ENCODE measurements at regions of chr15 and their contacts with region 1.

Region 1: DNA sequence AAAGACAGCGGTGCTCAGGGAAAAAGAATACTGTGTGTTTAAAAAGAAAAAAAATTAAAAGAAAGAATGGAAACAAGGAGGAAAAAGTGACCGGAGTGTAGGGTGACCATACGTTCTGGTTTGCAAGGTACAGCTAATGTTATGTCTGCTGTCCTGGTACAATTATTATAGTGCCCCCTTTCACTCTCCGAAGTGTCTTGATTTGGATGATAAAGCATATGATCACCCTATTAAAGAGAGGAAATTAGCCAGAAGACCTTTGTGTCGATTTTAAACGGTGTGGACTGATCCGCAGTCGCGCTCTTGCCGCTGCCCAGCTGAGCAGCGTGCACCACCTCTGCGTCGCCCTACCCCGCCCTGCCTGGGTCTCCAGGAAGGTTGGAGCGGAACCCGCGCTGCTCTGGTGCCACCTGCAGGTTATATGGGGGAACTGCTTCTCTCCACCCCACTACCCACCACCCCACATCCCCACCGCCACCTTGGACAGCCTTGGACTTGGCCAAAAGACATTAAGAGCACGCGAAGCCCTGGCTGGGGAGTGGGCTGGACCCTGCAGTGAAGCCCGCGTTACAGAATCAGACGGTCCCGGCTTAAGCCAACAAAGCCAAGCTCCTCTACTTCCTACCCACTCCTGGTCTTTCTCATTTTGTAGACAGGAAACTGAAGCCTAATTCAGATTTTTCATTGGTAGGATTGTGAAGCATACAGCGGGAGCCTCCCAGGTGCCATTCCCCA is 41.2 kb upstream of the UBE2Q2 start:
- DNase-seq: peak; percentile 85
- ATAC-seq: peak; percentile 99
- H3K4me3 Mint-ChIP-seq: peak overlapping the region; percentile 7
- H3K27ac Mint-ChIP-seq: no peak overlapping the region
- H3K4me1 Mint-ChIP-seq: peaks cover 7% of the 10 kb centered on the region
- H3K27me3 Mint-ChIP-seq: peaks cover 69% of the 10 kb centered on the region

Region 2: GRCh38 chr15:75684642-75685041 is 117.4 kb before region 1 on chr15:
- CTCF ChIA-PET with region 1: interaction called, 35 read pairs
- DNase-seq: no peak
- ATAC-seq: no peak
- H3K4me3 Mint-ChIP-seq: no peak overlapping the region
- H3K27ac Mint-ChIP-seq: no peak overlapping the region
- H3K4me1 Mint-ChIP-seq: no peaks in the 10 kb centered on the region
- H3K27me3 Mint-ChIP-seq: no peaks in the 10 kb centered on the region

Region 3: DNA sequence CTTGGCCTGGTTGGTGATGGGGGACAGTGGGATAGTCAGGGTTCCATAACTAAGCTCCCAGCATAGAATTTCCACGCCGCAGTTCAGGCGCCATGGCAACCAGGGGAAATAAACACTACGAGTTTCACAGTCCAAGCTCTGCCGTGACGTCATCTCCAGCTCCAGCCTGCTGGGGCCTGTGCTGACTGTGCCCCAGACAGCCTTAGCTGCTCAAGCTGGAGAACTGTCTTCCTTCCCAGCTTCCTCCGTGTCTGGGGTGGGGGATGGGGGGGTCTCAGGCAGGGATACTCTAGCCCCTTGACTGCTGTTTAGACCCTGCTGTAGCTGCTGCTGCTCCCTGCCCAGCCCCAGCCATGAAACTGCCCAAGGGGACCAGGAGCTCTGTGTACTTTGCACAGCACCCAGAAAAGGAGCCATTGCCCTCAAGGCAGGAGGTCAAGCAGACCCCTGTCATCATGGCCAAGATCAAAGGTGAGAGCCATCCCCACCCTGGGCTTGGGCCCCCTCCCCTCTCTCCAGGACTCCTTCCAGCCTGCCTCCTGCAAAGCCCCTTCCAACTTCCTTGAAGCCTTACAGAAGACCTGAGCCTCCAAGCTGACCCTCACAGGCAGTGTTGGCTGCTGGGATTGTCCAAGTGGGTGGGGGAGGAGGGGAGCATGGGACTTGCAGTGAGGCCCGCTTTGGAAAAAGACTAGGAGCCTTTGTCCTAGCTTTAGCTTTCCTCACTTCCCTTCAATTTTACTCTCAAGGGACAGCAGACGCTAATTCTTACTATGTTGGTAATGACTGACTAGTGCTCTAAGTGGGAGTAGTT is 78.0 kb before region 1 on chr15:
- CTCF ChIA-PET with region 1: interaction called, 51 read pairs
- DNase-seq: peak; percentile 69
- ATAC-seq: peak; percentile 63
- H3K4me3 Mint-ChIP-seq: no peak overlapping the region
- H3K27ac Mint-ChIP-seq: no peak overlapping the region
- H3K4me1 Mint-ChIP-seq: peaks cover 6% of the 10 kb centered on the region
- H3K27me3 Mint-ChIP-seq: peaks cover 12% of the 10 kb centered on the region

Region 4: GRCh38 chr15:75817138-75817935 is 15.3 kb after region 1 on chr15:
- CTCF ChIA-PET with region 1: interaction called, 24 read pairs
- DNase-seq: no peak
- ATAC-seq: peak; percentile 86
- H3K4me3 Mint-ChIP-seq: peak overlapping the region; percentile 66
- H3K27ac Mint-ChIP-seq: peak overlapping the region; percentile 82
- H3K4me1 Mint-ChIP-seq: peaks cover 23% of the 10 kb centered on the region
- H3K27me3 Mint-ChIP-seq: no peaks in the 10 kb centered on the region

Region 5: GRCh38 chr15:75823860-75824613 is 22.0 kb after region 1 on chr15:
- CTCF ChIA-PET with region 1: interaction called, 10 read pairs
- DNase-seq: no peak
- ATAC-seq: no peak
- H3K4me3 Mint-ChIP-seq: no peak overlapping the region
- H3K27ac Mint-ChIP-seq: no peak overlapping the region
- H3K4me1 Mint-ChIP-seq: peaks cover 16% of the 10 kb centered on the region
- H3K27me3 Mint-ChIP-seq: peaks cover 27% of the 10 kb centered on the region

Region 6: GRCh38 chr15:75842722-75843551 is 40.9 kb after region 1 on chr15 and contains the start of gene UBE2Q2:
- CTCF ChIA-PET with region 1: interaction called, 11 read pairs
- DNase-seq: peak; percentile 82
- ATAC-seq: peak; percentile 70
- H3K4me3 Mint-ChIP-seq: peak within 1 kb of the TSS; percentile 94
- H3K27ac Mint-ChIP-seq: peak within 1 kb of the TSS; percentile 86
- H3K4me1 Mint-ChIP-seq: peaks cover 35% of the 10 kb centered on the region
- H3K27me3 Mint-ChIP-seq: peaks cover 21% of the 10 kb centered on the region
- total RNA-seq, gene UBE2Q2: 25.5 to 36.3 TPM

Region 7: GRCh38 chr15:75921729-75922703 is 120.0 kb after region 1 on chr15:
- CTCF ChIA-PET with region 1: interaction called, 12 read pairs
- DNase-seq: no peak
- ATAC-seq: peak; percentile 33
- H3K4me3 Mint-ChIP-seq: no peak overlapping the region
- H3K27ac Mint-ChIP-seq: no peak overlapping the region
- H3K4me1 Mint-ChIP-seq: peaks cover 49% of the 10 kb centered on the region
- H3K27me3 Mint-ChIP-seq: no peaks in the 10 kb centered on the region